Body of pancreas (tissue), 4 donors: ENCODE measurements at regions of chr10 and their contacts with region 1.

Region 1: GRCh38 chr10:63644418-63645142 is 123.4 kb downstream of the REEP3 start:
- DNase-seq: no peak
- ATAC-seq: no peak
- H3K4me3 ChIP-seq: no peak overlapping the region
- H3K27ac ChIP-seq: peak overlapping the region in 1 of 4 donors; percentile 15
- H3K4me1 ChIP-seq: no peaks in the 10 kb centered on the region
- H3K27me3 ChIP-seq: no peaks in the 10 kb centered on the region
- CTCF ChIP-seq: no peak
- POLR2A ChIP-seq: no peak

Region 2: GRCh38 chr10:63588436-63589167 is 56.0 kb before region 1 on chr10:
- intact Hi-C with region 1: no loop called
- DNase-seq: peak in 2 of 4 donors; percentile 16 to 21
- ATAC-seq: no peak
- H3K4me3 ChIP-seq: no peak overlapping the region
- H3K27ac ChIP-seq: no peak overlapping the region
- H3K4me1 ChIP-seq: peaks cover 7% of the 10 kb centered on the region
- H3K27me3 ChIP-seq: no peaks in the 10 kb centered on the region
- CTCF ChIP-seq: no peak
- POLR2A ChIP-seq: no peak

Region 3: GRCh38 chr10:63699785-63700184 is 55.2 kb after region 1 on chr10:
- intact Hi-C with region 1: loop called (anchors 10 kb)
- DNase-seq: peak; percentile 39 to 72 (median 62)
- ATAC-seq: no peak
- H3K4me3 ChIP-seq: no peak overlapping the region
- H3K27ac ChIP-seq: peak overlapping the region in 3 of 4 donors; percentile 13 to 76 (median 71)
- H3K4me1 ChIP-seq: peaks cover 64% of the 10 kb centered on the region
- H3K27me3 ChIP-seq: no peaks in the 10 kb centered on the region
- CTCF ChIP-seq: no peak
- POLR2A ChIP-seq: no peak